Endothelial cell of umbilical vein (primary cell): ENCODE measurements at regions of chr4 and their contacts with region 1.

Region 1: DNA sequence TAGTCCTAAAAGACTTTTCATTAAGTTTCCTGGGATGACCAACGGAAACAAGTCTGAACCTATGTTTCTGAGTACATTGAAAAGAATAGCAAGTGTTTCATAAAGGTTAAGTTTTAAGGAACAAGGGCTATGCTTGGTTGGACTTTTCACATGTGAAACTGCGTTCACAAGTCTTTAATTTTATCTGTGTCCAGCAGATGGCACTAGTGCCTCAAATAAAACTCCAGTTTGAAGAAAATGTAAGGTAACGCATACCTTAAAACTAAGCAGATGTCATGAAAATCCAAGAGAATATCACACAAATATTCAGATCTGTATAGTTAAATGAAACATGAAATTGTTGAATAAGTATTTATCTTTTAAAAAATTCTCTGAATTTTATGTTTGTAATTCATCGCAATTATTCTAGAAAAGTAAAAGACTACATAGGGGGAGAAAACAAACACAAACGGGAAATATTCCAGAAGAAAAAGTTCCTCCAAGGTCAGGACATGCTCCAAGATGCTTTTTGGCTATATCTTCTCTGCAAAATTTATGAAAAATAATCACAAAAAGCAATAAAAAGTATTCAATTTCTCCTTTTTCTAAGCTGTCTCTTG is 89.6 kb upstream of the MAD2L1 start:
- DNase-seq: peak; percentile 79
- H3K4me3 ChIP-seq: no peak overlapping the region
- H3K27ac ChIP-seq: no peak overlapping the region
- H3K4me1 ChIP-seq: no peaks in the 10 kb centered on the region
- H3K27me3 ChIP-seq: no peaks in the 10 kb centered on the region
- CTCF ChIP-seq: peak; percentile 34
- POLR2A ChIP-seq: no peak

Region 2: DNA sequence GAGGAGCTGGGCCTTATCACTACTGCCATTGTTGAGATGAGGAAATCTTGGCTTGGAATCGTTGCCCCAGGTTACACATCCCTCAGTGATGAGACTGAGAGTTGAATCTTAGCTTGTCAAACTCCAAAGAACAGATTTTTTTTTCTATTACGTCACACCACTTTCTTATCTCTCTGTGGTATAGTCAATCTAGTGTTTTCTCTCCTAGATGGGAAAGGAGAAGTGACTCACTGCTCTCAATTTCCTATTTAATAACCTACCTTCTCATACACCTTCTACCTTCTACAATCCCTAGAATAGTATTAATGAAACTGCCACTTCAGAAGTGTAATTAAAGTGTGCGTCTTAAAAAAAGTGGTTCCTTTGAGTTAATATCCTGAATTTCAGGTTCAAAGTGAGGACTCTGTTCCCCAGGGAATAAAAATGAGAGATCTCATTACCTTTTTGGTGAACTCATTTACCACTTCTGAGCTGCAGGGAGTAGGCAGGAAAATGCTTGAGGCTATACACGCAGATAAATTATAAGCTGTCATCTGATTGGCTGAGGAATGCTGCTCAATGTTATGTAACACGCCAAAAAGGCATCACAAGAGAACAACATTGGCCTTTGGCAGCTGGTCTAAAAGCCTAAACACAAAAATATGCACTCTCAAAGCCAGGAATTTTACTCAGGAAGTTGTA is 148.9 kb before region 1 on chr4:
- CTCF ChIA-PET with region 1: no interaction called
- POLR2A ChIA-PET with region 1: no interaction called
- dilution Hi-C with region 1: no loop called
- intact Hi-C with region 1: no loop called
- DNase-seq: no peak
- H3K4me3 ChIP-seq: no peak overlapping the region
- H3K27ac ChIP-seq: no peak overlapping the region
- H3K4me1 ChIP-seq: no peaks in the 10 kb centered on the region
- H3K27me3 ChIP-seq: no peaks in the 10 kb centered on the region
- CTCF ChIP-seq: no peak
- POLR2A ChIP-seq: no peak

Region 3: DNA sequence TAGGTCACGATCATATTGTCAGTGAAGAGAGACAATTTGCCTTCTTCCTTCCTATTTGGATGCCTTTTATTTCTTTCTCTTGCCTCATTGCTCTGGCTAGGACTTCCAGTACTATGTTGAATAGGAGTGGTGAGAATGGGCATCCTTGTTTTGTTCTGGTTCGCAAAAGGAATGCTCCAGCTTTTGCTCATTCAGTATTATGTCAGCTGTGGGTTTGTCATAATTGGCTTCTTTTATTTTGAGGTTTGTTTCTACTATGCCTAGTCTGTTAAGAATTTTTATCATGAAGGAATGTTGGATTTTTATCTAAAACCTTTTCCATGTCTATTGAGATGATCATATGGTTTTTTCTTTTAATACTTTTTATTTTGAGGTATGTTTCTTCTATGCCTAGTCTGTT is 62.8 kb after region 1 on chr4:
- CTCF ChIA-PET with region 1: no interaction called
- POLR2A ChIA-PET with region 1: no interaction called
- dilution Hi-C with region 1: no loop called
- intact Hi-C with region 1: no loop called
- DNase-seq: no peak
- H3K4me3 ChIP-seq: no peak overlapping the region
- H3K27ac ChIP-seq: no peak overlapping the region
- H3K4me1 ChIP-seq: no peaks in the 10 kb centered on the region
- H3K27me3 ChIP-seq: no peaks in the 10 kb centered on the region
- CTCF ChIP-seq: no peak
- POLR2A ChIP-seq: no peak

Region 4: DNA sequence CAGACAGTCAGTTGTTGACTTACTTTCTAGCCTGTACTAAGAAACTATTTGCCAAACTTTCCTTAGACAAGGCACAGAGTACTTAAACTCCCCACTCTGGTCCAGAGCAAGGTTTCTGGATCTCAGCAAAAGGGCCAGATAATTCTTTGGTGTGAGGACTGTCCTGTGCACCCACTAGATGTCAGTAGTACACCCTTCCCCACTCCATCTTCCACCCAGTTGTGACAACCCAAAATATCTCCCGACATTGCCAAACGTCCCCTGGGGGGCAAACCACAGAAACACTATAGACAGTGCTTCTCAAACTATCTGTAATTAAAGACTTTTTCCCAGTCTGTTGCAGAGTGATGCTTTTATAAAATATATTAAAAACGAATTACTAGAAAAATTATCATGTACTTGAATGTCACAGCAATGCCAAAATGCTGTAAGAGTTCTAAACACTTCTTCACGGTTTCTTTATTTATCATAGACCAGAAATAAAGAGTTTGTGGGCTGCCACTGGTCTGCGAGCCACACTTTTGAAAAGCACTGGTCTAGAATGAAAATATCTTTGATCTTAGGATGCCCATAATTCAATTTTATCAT is 562.9 kb after region 1 on chr4:
- CTCF ChIA-PET with region 1: no interaction called
- POLR2A ChIA-PET with region 1: no interaction called
- dilution Hi-C with region 1: no loop called
- intact Hi-C with region 1: loop called (anchors 5 kb)
- DNase-seq: peak; percentile 49
- H3K4me3 ChIP-seq: no peak overlapping the region
- H3K27ac ChIP-seq: no peak overlapping the region
- H3K4me1 ChIP-seq: no peaks in the 10 kb centered on the region
- H3K27me3 ChIP-seq: no peaks in the 10 kb centered on the region
- CTCF ChIP-seq: peak; percentile 45 to 75
- POLR2A ChIP-seq: no peak

Region 5: DNA sequence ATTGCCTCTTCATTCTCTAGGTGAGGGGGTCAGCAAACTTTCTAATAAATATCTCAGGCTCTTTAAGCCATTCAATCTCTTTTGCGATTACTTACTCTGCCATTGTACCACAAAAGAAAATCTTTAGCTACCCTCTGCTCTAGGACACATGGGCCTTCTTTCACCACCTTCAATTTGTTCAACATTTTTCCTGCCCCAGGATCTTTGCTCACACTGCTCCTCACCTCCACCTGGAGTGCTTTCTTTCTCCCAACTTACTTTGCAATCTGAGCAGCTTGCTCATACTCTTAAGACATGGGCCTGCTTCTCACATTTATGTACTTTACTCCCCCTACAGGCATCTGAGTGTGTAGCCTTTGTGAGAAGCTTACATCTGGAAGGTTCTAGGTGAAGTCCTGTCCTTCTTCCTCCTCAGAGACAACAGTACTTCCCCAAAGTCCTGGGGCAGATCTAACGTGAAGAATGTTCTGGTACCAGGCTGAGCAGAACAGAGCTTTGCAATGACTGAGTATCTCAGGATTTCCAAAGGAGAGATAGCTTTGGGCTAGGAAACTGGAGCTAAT is 821.3 kb after region 1 on chr4:
- CTCF ChIA-PET with region 1: interaction called, 52 read pairs
- POLR2A ChIA-PET with region 1: no interaction called
- dilution Hi-C with region 1: no loop called
- intact Hi-C with region 1: loop called (anchors 1 kb)
- DNase-seq: peak; percentile 59
- H3K4me3 ChIP-seq: no peak overlapping the region
- H3K27ac ChIP-seq: no peak overlapping the region
- H3K4me1 ChIP-seq: no peaks in the 10 kb centered on the region
- H3K27me3 ChIP-seq: no peaks in the 10 kb centered on the region
- CTCF ChIP-seq: peak; percentile 26 to 63
- POLR2A ChIP-seq: no peak

Region 6: GRCh38 chr4:121096629-121097028 is 940.4 kb after region 1 on chr4:
- CTCF ChIA-PET with region 1: interaction called, 16 read pairs
- POLR2A ChIA-PET with region 1: no interaction called
- dilution Hi-C with region 1: no loop called
- intact Hi-C with region 1: loop called (anchors 1 kb)
- DNase-seq: peak; percentile 37
- H3K4me3 ChIP-seq: no peak overlapping the region
- H3K27ac ChIP-seq: no peak overlapping the region
- H3K4me1 ChIP-seq: no peaks in the 10 kb centered on the region
- H3K27me3 ChIP-seq: no peaks in the 10 kb centered on the region
- CTCF ChIP-seq: peak in 1 of 2 donors; percentile 14
- POLR2A ChIP-seq: no peak

Region 7: DNA sequence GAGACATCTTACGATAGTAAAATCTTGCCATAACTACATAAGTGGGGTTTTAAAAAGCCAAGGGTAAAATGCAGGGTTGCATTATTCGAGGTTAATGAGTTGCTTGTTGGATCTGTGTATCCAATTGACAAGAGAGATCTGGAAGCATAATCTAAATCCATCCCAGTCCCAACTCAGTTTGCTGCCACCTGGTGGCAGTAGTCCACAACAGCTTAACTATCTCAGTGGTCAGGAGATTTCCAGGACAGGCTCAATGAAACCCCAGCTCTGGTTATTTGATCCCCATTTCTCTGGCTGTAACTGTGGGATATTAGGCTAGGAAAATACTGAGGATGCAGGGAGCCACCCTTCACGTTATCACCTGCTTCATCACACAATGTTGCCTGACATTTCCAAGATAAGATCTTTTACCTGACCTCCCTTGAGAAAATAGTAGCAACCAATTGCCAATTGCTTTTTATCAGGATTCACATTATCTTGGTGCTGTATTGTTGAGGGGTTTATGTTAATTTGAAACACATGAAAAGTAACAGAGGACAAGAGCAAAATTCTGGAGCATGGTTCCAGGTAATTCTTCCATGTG is 1096.1 kb after region 1 on chr4:
- CTCF ChIA-PET with region 1: interaction called, 14 read pairs
- POLR2A ChIA-PET with region 1: no interaction called
- dilution Hi-C with region 1: no loop called
- intact Hi-C with region 1: loop called (anchors 1 kb)
- DNase-seq: peak; percentile 65
- H3K4me3 ChIP-seq: no peak overlapping the region
- H3K27ac ChIP-seq: no peak overlapping the region
- H3K4me1 ChIP-seq: peaks cover 2% of the 10 kb centered on the region
- H3K27me3 ChIP-seq: peaks cover 0 to 3% of the 10 kb centered on the region in 2 experiments
- CTCF ChIP-seq: peak; percentile 75 to 81
- POLR2A ChIP-seq: no peak